Testis (tissue), 5 donors: ENCODE measurements at regions of chr3 and their contacts with region 1.

Region 1: GRCh38 chr3:51498876-51499738 is 708 bp downstream of the DCAF1 start:
- DNase-seq: peak; percentile 97
- H3K4me3 ChIP-seq: peak overlapping the region; percentile 86 to 96
- H3K27ac ChIP-seq: peak overlapping the region; percentile 95 to 96
- H3K4me1 ChIP-seq: peaks cover 21% of the 10 kb centered on the region
- H3K27me3 ChIP-seq: no peaks in the 10 kb centered on the region
- CTCF ChIP-seq: no peak
- POLR2A ChIP-seq: no peak

Region 2: GRCh38 chr3:51362476-51362875 is 136.6 kb before region 1 on chr3:
- intact Hi-C with region 1: no loop called
- DNase-seq: no peak
- H3K4me3 ChIP-seq: no peak overlapping the region
- H3K27ac ChIP-seq: no peak overlapping the region
- H3K4me1 ChIP-seq: no peaks in the 10 kb centered on the region
- H3K27me3 ChIP-seq: no peaks in the 10 kb centered on the region
- CTCF ChIP-seq: no peak
- POLR2A ChIP-seq: no peak

Region 3: DNA sequence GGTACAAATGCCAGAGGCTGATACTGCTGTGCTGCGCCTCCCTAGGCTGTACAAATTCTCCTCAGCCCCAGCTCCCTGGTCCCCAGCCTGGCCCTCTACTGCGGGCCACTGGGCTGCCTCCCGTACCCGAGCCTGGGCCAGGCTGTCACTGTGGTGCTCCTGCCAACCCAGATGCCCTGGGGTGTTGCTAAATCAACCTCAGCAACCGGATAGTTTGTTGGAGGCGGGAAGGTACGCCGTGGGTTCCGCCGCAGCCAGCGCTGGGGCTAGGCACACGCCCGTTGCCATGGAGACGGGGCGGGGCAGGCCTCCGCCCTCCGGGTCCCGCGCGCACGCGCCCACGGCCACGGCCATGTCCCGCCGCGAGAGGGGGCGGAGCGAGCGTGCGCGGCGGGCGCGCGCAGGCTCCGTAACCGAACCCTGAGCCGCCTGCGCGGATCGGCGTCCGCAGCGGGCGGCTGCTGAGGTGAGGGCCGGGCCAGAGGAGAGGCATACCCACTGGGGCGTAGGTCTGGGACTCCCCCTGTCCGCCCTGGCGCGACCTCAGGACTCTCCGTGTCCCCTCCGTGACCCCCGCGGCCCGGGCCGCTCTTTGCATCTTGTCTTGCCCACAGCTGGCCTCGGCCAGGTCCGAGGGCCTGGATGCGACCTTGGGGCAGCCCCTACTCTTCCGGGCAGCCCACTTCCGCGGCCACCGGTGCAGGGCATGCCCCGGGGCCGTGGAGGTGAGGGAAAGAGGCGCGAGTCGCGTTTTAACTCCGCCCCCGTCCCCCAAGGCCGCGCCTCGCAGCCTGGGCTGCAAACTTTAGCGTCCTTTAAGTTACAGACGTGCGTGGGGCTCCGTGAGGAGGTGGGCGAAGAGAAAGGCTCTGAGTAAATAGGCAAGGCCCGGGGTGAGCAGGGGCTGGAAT is 172.0 kb after region 1 on chr3 and contains the start of gene TEX264:
- intact Hi-C with region 1: loop called (anchors 5 kb)
- DNase-seq: peak; percentile 93
- H3K4me3 ChIP-seq: peak within 1 kb of the TSS; percentile 76 to 99
- H3K27ac ChIP-seq: peak within 1 kb of the TSS; percentile 83 to 92
- H3K4me1 ChIP-seq: peaks cover 20% of the 10 kb centered on the region
- H3K27me3 ChIP-seq: no peaks in the 10 kb centered on the region
- CTCF ChIP-seq: no peak
- POLR2A ChIP-seq: peak; percentile 37
- total RNA-seq, gene TEX264: 241 to 251 TPM